IMR-90 (cell line): ENCODE measurements at regions of chr10 and their contacts with region 1.

Region 1: GRCh38 chr10:100481462-100482081 is 18.8 kb downstream of the WNT8B start:
- DNase-seq: peak; percentile 81
- ATAC-seq: peak; percentile 95
- H3K4me3 ChIP-seq: peak overlapping the region; percentile 38
- H3K27ac ChIP-seq: no peak overlapping the region
- H3K4me1 ChIP-seq: peaks cover 4% of the 10 kb centered on the region; the same call in 1 of the 2 replicates
- H3K27me3 ChIP-seq: peaks cover 36% of the 10 kb centered on the region
- CTCF ChIP-seq: no peak
- POLR2A ChIP-seq: no peak
- RAD21 ChIP-seq: no peak

Region 2: GRCh38 chr10:100496567-100496966 is 15.0 kb after region 1 on chr10:
- CTCF ChIA-PET with region 1: interaction called, 22 read pairs
- POLR2A ChIA-PET with region 1: no interaction called
- dilution Hi-C with region 1: no loop called
- in situ Hi-C with region 1: no loop called
- intact Hi-C with region 1: no loop called
- DNase-seq: no peak
- ATAC-seq: no peak
- H3K4me3 ChIP-seq: no peak overlapping the region
- H3K27ac ChIP-seq: no peak overlapping the region
- H3K4me1 ChIP-seq: peaks cover under 1% of the 10 kb centered on the region; the same call in 1 of the 2 replicates
- H3K27me3 ChIP-seq: no peaks in the 10 kb centered on the region
- CTCF ChIP-seq: no peak
- POLR2A ChIP-seq: no peak
- RAD21 ChIP-seq: no peak